ENCODE measurements at regions of chr11 and their contacts with region 1.

Region 1: DNA sequence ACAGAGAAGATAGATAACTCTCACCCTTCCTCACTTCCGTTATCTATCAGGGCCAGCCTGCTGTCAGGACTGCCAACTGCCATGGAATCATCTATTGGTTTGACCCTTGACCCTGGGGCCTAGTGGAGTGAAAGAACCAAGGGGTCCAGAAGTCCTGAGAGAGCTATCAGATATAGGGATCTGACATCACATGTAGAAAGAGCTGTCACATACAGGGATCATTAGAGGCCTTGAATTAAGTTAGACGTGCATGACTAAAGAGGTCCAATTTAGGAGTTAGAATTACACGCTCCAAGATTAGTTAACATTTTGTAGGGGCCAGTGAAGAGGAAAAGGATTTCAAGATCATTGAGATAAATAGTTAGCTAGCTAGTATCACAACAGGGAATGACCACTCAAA is at the start of gene TMEM225:
- DNase-seq: no peak
- ATAC-seq: no peak
- H3K4me3 ChIP-seq: no peak within 1 kb of the TSS
- H3K27ac ChIP-seq: no peak within 1 kb of the TSS
- H3K4me1 ChIP-seq: no peaks in the 10 kb centered on the region
- H3K27me3 ChIP-seq: no peaks in the 10 kb centered on the region
- CTCF ChIP-seq: no peak
- POLR2A ChIP-seq: no peak
- total RNA-seq, gene TMEM225: not detected

Region 2: DNA sequence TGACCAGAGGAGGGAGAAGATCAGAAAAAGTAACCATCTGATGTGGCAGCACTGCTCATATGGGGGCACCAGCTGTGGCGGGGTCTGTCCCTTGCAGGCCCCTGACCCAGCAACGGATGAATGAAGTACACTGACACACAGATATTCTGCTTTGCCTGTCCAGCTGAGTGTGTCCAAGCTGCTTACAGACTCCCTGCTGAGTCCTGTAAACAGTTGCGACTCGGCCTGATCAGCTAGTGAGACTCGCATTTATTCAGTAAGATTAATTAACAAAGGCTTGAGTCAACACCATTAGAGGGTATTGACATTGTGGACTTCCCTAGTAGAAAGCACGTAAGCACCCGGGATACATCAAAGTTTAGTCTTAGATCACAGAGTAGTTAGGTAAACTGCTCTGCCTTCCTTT is 282.3 kb after region 1 on chr11:
- intact Hi-C with region 1: loop called in 1 of 10 experiments (anchors 10 kb)
- DNase-seq: no peak
- ATAC-seq: no peak
- H3K4me3 ChIP-seq: no peak overlapping the region
- H3K27ac ChIP-seq: no peak overlapping the region
- H3K4me1 ChIP-seq: no peaks in the 10 kb centered on the region
- H3K27me3 ChIP-seq: no peaks in the 10 kb centered on the region
- CTCF ChIP-seq: no peak
- POLR2A ChIP-seq: no peak

Measured in heart left ventricle (tissue), 16 donors.